Psoas muscle (tissue), 8 donors: ENCODE measurements at regions of chr22 and their contacts with region 1.

Region 1: DNA sequence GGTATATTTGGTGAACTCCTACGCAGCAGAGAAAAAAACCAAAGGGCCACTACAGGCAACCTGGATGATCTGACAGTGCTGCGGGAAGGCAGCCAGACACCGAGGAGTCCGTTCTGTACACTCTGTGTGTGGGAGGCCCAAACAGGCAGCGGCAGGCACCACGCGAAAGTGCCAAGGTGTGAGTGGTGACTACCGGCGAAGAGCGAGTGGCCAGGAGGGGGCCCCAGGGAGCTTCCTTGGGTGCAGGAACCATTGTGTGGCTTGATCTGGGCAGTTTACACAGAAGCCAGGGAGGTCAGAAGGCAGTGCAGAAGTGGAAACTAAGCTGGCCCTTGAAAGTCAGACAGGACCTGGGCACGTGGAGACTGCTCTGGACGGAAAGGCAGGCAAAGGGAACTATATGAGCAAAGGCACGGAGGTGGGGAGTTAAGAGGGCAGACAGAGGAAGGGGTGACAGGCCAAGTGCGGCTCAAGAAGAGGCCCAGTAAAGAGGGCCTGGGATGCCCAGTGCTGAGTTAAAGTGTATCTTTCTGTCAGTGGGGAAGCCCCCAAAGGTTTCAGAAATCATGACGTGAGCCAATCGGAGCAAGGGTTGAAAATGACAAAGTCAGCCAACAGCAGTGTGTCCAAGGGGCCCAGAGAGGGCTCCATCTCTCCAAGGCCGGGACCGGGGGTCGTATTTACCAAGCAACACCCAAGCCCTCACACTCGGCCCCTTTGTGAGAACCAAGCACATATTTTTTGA is 10.6 kb downstream of the TMEM184B start:
- DNase-seq: peak; percentile 57 to 79
- ATAC-seq: peak; percentile 71 to 83 (median 79)
- H3K4me3 ChIP-seq: no peak overlapping the region
- H3K27ac ChIP-seq: peak overlapping the region; percentile 57
- H3K4me1 ChIP-seq: peaks cover 64% of the 10 kb centered on the region
- H3K27me3 ChIP-seq: no peaks in the 10 kb centered on the region
- CTCF ChIP-seq: peak; percentile 52

Region 2: GRCh38 chr22:38104084-38104483 is 158.1 kb before region 1 on chr22:
- intact Hi-C with region 1: no loop called
- DNase-seq: peak in 1 of 2 donors; percentile 54
- ATAC-seq: peak; percentile 72 to 88 (median 77)
- H3K4me3 ChIP-seq: no peak overlapping the region
- H3K27ac ChIP-seq: no peak overlapping the region
- H3K4me1 ChIP-seq: no peaks in the 10 kb centered on the region
- H3K27me3 ChIP-seq: no peaks in the 10 kb centered on the region
- CTCF ChIP-seq: peak; percentile 47

Region 3: DNA sequence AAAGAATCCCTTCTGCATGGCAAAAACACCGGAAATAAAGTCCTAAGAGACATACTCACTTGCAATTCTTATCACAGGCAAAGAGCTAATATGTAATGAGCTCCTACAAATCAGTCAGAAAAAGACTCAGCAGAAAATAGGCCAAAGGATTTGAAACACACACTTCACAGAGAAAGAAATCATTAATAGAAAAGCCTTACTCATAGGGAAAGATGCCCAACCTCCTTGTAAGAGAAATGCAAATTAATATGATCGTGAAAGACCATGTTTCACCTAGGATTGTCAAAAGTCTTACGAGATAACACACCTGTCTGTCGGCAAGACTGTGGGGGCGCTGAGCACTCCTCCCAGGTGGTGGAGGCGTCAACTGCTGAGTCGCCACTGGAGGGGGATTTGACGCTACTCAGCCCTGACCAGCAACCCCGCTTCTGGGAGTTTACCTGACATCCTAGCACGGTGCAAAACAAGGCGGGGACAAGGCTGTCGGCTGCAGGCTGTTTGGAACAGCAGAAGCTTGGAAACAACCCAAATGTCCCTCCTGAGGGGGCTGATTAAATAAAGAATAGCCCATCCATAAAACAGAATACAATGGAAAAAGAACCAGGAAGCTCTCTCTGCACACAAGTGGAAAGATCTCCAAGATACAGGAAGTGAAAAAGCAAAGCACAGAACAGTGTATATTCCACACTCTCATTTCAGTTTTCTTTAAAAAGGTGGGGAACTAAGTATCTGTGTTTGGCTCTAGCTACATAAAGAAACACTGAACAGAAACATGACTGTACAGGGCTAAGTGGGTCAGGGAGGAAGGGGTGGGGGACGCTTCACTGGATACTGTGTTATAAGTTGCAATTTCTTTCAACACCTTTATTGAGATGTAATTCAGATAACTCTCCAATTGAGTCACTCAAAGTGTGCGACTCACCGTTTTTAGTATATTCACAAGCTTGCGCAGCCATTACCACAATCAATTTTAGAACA is 43.5 kb after region 1 on chr22:
- intact Hi-C with region 1: loop called in 1 of 2 experiments (anchors 5 kb)
- DNase-seq: no peak
- ATAC-seq: peak in 2 of 4 donors; percentile 19 to 36
- H3K4me3 ChIP-seq: no peak overlapping the region
- H3K27ac ChIP-seq: peak overlapping the region; percentile 51
- H3K4me1 ChIP-seq: peaks cover 70% of the 10 kb centered on the region
- H3K27me3 ChIP-seq: no peaks in the 10 kb centered on the region
- CTCF ChIP-seq: no peak